ENCODE measurements at regions of chr10 and their contacts with region 1.

Region 1: GRCh38 chr10:33273295-33274002 is 61.0 kb downstream of the NRP1 start:
- DNase-seq: peak; percentile 68 to 97
- H3K4me3 ChIP-seq: peak overlapping the region; percentile 43 to 54
- H3K27ac ChIP-seq: peak overlapping the region; percentile 73 to 93
- H3K4me1 ChIP-seq: peaks cover 0 to 33% of the 10 kb centered on the region in 2 donors
- H3K27me3 ChIP-seq: no peaks in the 10 kb centered on the region
- CTCF ChIP-seq: peak in 1 of 3 experiments; percentile 31

Region 2: GRCh38 chr10:33216661-33217427 is 56.6 kb before region 1 on chr10:
- intact Hi-C with region 1: loop called (anchors 5 kb)
- DNase-seq: no peak
- H3K4me3 ChIP-seq: no peak overlapping the region
- H3K27ac ChIP-seq: peak overlapping the region; percentile 62 to 66
- H3K4me1 ChIP-seq: peaks cover 4 to 16% of the 10 kb centered on the region in 2 donors
- H3K27me3 ChIP-seq: no peaks in the 10 kb centered on the region
- CTCF ChIP-seq: no peak

Region 3: DNA sequence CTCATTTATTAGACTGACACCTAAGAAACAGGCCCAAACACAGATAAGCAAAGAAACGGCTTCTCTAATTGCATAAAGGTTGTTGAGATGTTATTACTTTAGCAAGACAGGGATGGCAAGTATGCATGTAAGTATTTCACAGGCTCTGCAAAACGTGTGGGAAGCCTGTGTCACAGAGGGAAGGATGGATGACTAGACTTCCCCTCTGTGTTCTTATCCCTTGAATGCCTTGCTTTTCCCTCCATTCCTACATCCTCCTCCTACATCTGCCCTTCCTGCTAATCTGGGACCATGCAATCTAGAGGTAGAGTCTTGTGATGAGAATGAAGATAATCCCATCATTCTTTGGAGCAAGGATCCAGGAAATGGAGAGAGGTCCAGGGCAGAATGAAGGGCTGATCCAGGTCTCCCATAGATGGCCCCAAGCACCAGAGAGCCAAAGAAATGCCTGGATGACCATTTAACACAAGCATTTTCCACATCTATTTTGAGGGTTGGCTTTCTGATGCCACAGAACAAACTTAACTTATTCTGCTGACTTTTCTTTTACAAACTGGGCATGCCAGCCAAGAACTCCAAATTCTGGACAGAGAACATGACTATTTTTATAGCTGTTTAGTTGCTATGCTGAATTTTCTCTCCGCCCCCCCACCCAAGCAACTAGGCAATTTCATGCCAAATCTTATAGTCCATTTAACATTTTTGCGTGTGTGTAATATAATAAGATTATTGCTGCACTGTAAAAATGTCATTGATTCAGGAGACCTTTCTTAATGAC is 12.9 kb after region 1 on chr10:
- intact Hi-C with region 1: loop called (anchors 2 kb)
- DNase-seq: peak in 1 of 2 donors; percentile 80
- H3K4me3 ChIP-seq: no peak overlapping the region
- H3K27ac ChIP-seq: peak overlapping the region; percentile 73 to 75
- H3K4me1 ChIP-seq: peaks cover 10 to 43% of the 10 kb centered on the region in 2 donors
- H3K27me3 ChIP-seq: no peaks in the 10 kb centered on the region
- CTCF ChIP-seq: no peak

Region 4: DNA sequence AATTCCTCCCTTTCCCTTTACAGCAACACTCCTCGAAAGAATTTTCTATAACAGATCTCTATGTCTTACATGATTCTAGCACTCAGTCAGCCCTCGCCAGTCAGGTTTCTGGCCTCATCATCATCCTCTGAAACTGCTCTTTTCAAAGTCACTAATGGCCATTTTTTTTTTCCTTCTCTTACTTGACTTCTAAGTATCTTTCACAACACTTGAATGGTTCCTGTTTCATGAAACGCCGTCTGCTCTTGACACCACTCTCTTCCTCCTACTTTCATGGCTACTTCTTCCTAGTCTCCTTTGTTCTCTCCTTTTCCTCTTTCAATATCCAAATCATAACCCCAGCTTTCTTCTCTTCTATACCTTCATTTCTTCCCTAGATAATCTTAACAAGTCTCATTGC is 161.5 kb after region 1 on chr10:
- intact Hi-C with region 1: no loop called
- DNase-seq: no peak
- H3K4me3 ChIP-seq: no peak overlapping the region
- H3K27ac ChIP-seq: no peak overlapping the region
- H3K4me1 ChIP-seq: no peaks in the 10 kb centered on the region
- H3K27me3 ChIP-seq: no peaks in the 10 kb centered on the region
- CTCF ChIP-seq: no peak